SK-N-SH (cell line): ENCODE measurements at regions of chrX and their contacts with region 1.

Region 1: GRCh38 chrX:69093960-69094871 is 71.0 kb downstream of the PJA1 start:
- DNase-seq: peak; percentile 68
- H3K4me3 ChIP-seq: no peak overlapping the region
- H3K27ac ChIP-seq: no peak overlapping the region
- H3K4me1 ChIP-seq: peaks cover 0 to 17% of the 10 kb centered on the region in 2 experiments; a peak in 1 of 4 replicates
- H3K27me3 ChIP-seq: peaks cover 17% of the 10 kb centered on the region; the same call in 1 of the 2 replicates
- CTCF ChIP-seq: peak; percentile 68
- EP300 ChIP-seq: no peak
- RAD21 ChIP-seq: peak; percentile 51

Region 2: DNA sequence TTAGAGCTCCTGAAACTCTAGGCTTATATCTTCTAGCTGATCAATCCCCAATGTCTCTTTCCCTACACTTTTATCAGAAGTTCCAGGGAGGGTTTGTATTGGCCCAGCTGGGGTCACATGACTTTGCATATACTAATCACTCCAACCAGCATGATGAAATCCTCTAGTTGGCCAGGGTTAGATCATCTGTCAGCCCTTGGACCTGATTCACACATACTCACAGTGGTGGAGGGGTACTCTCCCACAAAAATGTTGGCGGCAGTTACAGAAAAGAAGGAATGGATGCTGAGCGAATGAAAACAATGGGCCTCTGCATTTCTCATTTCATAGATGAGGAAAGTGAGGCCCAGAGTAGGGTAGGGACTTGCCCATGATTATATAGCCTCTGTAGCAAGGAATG is 80.0 kb before region 1 on chrX:
- CTCF ChIA-PET with region 1: no interaction called
- POLR2A ChIA-PET with region 1: no interaction called
- DNase-seq: no peak
- H3K4me3 ChIP-seq: no peak overlapping the region
- H3K27ac ChIP-seq: no peak overlapping the region
- H3K4me1 ChIP-seq: peaks cover 0 to 3% of the 10 kb centered on the region in 2 experiments; a peak in 1 of 4 replicates
- H3K27me3 ChIP-seq: no peaks in the 10 kb centered on the region; the same call in 1 of the 2 replicates
- CTCF ChIP-seq: no peak
- EP300 ChIP-seq: no peak
- RAD21 ChIP-seq: no peak

Region 3: GRCh38 chrX:69070949-69071650 is 23.1 kb before region 1 on chrX:
- CTCF ChIA-PET with region 1: interaction called, 10 read pairs
- POLR2A ChIA-PET with region 1: no interaction called
- DNase-seq: peak; percentile 63
- H3K4me3 ChIP-seq: no peak overlapping the region
- H3K27ac ChIP-seq: peak overlapping the region in 1 of 2 experiments; percentile 78; a peak in 2 of 4 replicates
- H3K4me1 ChIP-seq: peaks cover 0 to 42% of the 10 kb centered on the region in 2 experiments; a peak in 1 of 4 replicates
- H3K27me3 ChIP-seq: no peaks in the 10 kb centered on the region; the same call in 1 of the 2 replicates
- CTCF ChIP-seq: no peak
- EP300 ChIP-seq: no peak
- RAD21 ChIP-seq: no peak